ENCODE measurements at regions of chr7 and their contacts with region 1.

Region 1: GRCh38 chr7:4681886-4682620 is at the start of gene FOXK1:
- DNase-seq: peak; percentile 80
- ATAC-seq: peak; percentile 81
- H3K4me3 Mint-ChIP-seq: peak within 1 kb of the TSS; percentile 80
- H3K27ac Mint-ChIP-seq: peak within 1 kb of the TSS; percentile 88
- H3K4me1 Mint-ChIP-seq: peaks cover 26% of the 10 kb centered on the region
- H3K27me3 Mint-ChIP-seq: no peaks in the 10 kb centered on the region
- total RNA-seq, gene FOXK1: 26.8 to 28.5 TPM

Region 2: GRCh38 chr7:4641667-4642467 is 40.2 kb before region 1 on chr7:
- CTCF ChIA-PET with region 1: interaction called, 16 read pairs
- POLR2A ChIA-PET with region 1: interaction called, 52 read pairs
- DNase-seq: peak; percentile 96
- ATAC-seq: peak; percentile 84
- H3K4me3 Mint-ChIP-seq: peak overlapping the region; percentile 92
- H3K27ac Mint-ChIP-seq: peak overlapping the region; percentile 96
- H3K4me1 Mint-ChIP-seq: peaks cover 19% of the 10 kb centered on the region
- H3K27me3 Mint-ChIP-seq: no peaks in the 10 kb centered on the region

Region 3: DNA sequence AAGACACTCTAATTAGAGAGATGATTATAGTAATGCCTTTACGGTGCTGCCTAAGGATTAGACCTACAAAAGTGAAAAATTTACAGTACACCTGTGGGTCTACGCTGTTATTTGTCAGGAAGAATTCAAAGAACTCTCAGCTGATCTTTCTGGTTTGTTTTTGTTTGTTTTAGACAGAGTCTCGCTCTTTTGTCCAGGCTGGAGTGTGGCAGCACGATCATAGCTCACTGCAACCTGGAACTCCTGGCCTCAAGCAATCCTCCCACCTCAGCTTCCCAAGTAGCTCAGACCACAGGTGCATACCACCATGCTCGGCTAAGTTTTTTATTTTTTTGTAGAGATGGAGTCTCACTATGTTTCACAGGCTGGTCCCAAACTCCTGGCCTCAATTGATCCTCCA is 28.3 kb before region 1 on chr7:
- CTCF ChIA-PET with region 1: no interaction called
- POLR2A ChIA-PET with region 1: no interaction called
- DNase-seq: no peak
- ATAC-seq: no peak
- H3K4me3 Mint-ChIP-seq: no peak overlapping the region
- H3K27ac Mint-ChIP-seq: no peak overlapping the region
- H3K4me1 Mint-ChIP-seq: no peaks in the 10 kb centered on the region
- H3K27me3 Mint-ChIP-seq: no peaks in the 10 kb centered on the region

Measured in activated CD8-positive, alpha-beta T cell treated with anti-CD3 and anti-CD28 coated beads, Interleukin-2, amount 10 ng/mL, durations not matched to agents 7 days and 5 days (primary cell).